Spleen (tissue), 13 donors: ENCODE measurements at regions of chr5 and their contacts with region 1.

Region 1: GRCh38 chr5:36944607-36945225 is 68.1 kb downstream of the NIPBL start:
- DNase-seq: no peak
- H3K4me3 ChIP-seq: no peak overlapping the region
- H3K27ac ChIP-seq: no peak overlapping the region
- H3K4me1 ChIP-seq: peaks cover 11 to 77% (median 51%) of the 10 kb centered on the region in 6 donors
- H3K27me3 ChIP-seq: no peaks in the 10 kb centered on the region
- CTCF ChIP-seq: peak; percentile 26 to 72 (median 59)
- POLR2A ChIP-seq: no peak

Region 2: GRCh38 chr5:36836831-36837230 is 107.9 kb before region 1 on chr5:
- intact Hi-C with region 1: no loop called
- DNase-seq: no peak
- H3K4me3 ChIP-seq: no peak overlapping the region
- H3K27ac ChIP-seq: no peak overlapping the region
- H3K4me1 ChIP-seq: peaks cover 0 to 28% (median 4%) of the 10 kb centered on the region in 6 donors
- H3K27me3 ChIP-seq: no peaks in the 10 kb centered on the region
- CTCF ChIP-seq: no peak
- POLR2A ChIP-seq: no peak

Region 3: DNA sequence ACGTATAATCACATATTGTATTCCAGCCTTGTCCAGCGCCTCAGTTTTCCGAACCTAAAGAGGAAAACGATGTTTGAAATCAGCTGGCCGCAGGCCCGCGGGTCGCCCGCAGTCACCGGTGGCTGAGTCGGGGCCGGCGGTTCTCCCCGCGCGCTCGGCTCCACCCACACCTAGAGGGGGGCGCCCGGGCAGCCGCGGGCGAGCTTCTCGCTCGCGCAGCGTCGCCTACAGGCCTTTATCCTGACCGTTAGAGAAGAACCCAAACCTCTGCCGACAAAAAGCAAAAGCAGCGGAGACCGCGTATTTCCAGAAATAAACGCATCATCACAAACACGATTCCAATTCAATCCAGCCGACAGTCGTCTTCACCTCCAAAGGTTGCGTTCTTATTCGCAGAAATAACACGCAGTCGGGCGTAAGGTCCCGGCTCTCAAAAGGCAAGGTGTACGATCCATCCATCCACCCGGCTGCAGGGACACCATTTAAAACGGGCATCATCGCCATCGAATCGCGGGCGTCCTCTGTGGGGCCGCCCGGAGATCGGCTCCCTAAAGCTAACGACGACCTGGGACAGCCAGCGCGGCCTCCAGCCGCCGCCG is 68.8 kb before region 1 on chr5:
- intact Hi-C with region 1: loop called (anchors 5 kb)
- DNase-seq: peak; percentile 97
- H3K4me3 ChIP-seq: peak overlapping the region; percentile 65 to 89 (median 78)
- H3K27ac ChIP-seq: peak overlapping the region; percentile 96 to 99 (median 98)
- H3K4me1 ChIP-seq: peaks cover 49 to 81% (median 69%) of the 10 kb centered on the region in 6 donors
- H3K27me3 ChIP-seq: no peaks in the 10 kb centered on the region
- CTCF ChIP-seq: peak; percentile 14 to 65 (median 47)
- POLR2A ChIP-seq: peak in 1 of 3 donors; percentile 35